ENCODE measurements at regions of chr21 and their contacts with region 1.

Region 1: GRCh38 chr21:39088831-39089380 is 94.3 kb downstream of the PSMG1 start:
- DNase-seq: peak; percentile 84 to 86
- ATAC-seq: peak; percentile 37
- H3K4me3 ChIP-seq: no peak overlapping the region
- H3K27ac ChIP-seq: peak overlapping the region; percentile 93 to 95
- H3K4me1 ChIP-seq: peaks cover 4 to 6% of the 10 kb centered on the region in 2 donors
- H3K27me3 ChIP-seq: no peaks in the 10 kb centered on the region

Region 2: DNA sequence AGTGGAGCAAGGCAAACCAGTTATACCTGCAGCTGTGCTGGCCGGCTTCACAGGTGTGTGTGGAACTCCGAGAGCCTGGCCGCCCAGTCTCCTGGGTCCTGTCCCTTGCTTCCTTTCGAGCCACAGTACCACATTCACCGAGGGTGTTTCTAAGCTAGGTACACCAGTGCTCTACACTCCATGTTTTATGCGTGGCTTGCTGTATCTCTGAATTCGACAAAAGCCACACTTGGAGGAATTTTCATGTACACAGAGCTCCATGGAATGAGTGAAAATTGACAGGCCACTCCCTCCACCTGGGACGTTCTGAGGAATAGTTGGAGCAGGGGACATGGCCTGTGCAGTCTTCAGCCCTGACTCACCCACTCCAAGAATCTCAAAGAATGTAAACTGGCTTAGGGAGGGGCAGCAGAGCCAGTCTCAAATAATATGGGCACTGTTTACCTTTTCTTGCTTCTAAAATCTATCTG is 269.2 kb before region 1 on chr21:
- intact Hi-C with region 1: loop called in 1 of 2 experiments (anchors 5 kb)
- DNase-seq: no peak
- ATAC-seq: no peak
- H3K4me3 ChIP-seq: no peak overlapping the region
- H3K27ac ChIP-seq: peak overlapping the region; percentile 29
- H3K4me1 ChIP-seq: peaks cover 0 to 4% of the 10 kb centered on the region in 2 donors
- H3K27me3 ChIP-seq: no peaks in the 10 kb centered on the region

Region 3: GRCh38 chr21:38925923-38926322 is 163.0 kb before region 1 on chr21:
- intact Hi-C with region 1: loop called (anchors 5 kb)
- DNase-seq: peak; percentile 89
- ATAC-seq: peak; percentile 87
- H3K4me3 ChIP-seq: no peak overlapping the region
- H3K27ac ChIP-seq: peak overlapping the region; percentile 61 to 98
- H3K4me1 ChIP-seq: no peaks in the 10 kb centered on the region
- H3K27me3 ChIP-seq: no peaks in the 10 kb centered on the region

Region 4: DNA sequence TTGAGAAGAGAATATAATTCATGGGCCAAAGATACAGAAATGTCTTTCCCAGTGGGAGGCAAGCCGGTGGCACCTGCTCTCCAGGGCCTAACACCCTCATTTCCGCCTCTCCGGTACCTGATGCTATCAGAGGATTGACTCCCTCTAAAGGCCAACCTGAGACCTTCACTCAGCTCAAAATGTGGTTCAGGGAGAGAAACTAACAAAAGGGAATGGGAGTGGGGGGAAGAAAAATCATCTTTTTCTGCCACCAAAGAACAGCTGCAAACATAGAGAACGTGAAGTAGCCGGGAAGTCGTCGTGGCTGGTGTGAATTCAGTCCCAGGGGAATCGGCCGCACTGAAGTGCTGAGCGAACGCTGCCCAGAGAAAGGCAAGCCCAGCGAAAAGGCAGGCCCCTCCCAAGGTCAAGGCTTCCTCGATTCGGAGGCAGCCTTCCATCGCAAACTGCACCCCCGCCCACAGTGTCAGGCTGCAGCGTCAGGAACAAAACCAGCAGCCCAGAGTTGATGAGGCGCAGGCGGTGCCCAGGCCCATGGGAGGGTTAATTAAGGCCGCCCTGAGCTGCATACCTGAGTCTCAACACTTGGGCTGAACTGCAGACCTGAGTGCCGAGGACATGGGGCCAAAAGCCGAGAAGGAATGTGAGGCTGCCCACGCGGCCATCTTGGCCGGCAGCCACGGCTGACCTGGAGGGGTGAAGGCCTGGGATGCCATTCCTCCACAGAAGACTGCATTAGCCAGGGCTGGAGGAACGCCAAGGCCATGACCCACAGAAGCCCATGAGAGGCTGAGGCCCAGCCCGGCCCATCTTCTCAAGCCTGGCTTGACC is 65.8 kb before region 1 on chr21:
- intact Hi-C with region 1: loop called in 1 of 2 experiments (anchors 5 kb)
- DNase-seq: peak; percentile 88 to 94
- ATAC-seq: peak; percentile 77
- H3K4me3 ChIP-seq: no peak overlapping the region
- H3K27ac ChIP-seq: peak overlapping the region; percentile 9 to 92
- H3K4me1 ChIP-seq: peaks cover 0 to 4% of the 10 kb centered on the region in 2 donors
- H3K27me3 ChIP-seq: no peaks in the 10 kb centered on the region

Region 5: DNA sequence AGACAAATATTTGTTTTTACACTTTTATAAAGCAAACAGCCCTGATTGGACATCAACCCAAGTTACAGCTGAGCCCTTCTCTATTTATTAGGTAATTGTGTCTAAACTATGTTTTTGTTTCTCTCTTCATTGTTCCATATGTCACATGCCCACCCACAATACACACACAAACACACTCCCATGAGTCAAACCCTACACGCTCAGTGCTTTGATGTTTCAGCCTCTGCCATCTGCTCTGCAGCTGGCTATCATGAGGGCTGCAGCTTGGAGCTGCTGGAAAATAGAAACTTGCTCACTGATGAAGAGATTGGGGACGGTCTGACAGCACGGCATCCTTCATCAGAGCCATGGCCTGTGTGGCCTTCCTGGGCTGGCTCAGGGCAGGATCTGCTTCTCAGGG is 52.6 kb after region 1 on chr21:
- intact Hi-C with region 1: no loop called
- DNase-seq: no peak
- ATAC-seq: no peak
- H3K4me3 ChIP-seq: no peak overlapping the region
- H3K27ac ChIP-seq: no peak overlapping the region
- H3K4me1 ChIP-seq: no peaks in the 10 kb centered on the region
- H3K27me3 ChIP-seq: no peaks in the 10 kb centered on the region

Measured in aorta (tissue), 5 donors.